ENCODE measurements at regions of chr3 and their contacts with region 1.

Region 1: DNA sequence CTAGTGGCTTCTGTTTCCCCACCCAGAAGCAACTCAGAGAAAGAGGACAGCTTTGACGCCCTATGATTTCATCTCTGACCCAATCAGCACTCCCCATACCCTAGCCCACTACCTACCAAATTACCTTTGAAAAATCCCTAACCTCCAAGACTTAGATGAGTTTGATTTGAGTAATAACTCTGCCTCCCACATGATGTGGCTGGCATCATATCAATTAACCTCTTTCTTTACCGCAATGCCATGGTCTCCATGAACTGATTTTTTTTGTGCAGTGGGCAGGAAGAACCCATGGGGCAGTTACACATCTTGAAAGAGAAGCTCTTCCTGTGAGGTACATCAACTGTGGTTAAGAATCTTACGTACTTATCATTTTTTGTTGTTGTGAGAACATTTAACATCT is 25.5 kb upstream of the APOD start:
- DNase-seq: peak in 28 of 35 experiments; percentile 12 to 78 (median 40)
- ATAC-seq: peak; percentile 73 to 96 (median 93)
- H3K4me3 ChIP-seq: no peak overlapping the region
- H3K4me3 Mint-ChIP-seq: peak overlapping the region in 1 of 3 donors; percentile 32
- H3K27ac ChIP-seq: peak overlapping the region; percentile 62
- H3K27ac Mint-ChIP-seq: peak overlapping the region; percentile 70 to 82
- H3K4me1 ChIP-seq: peaks cover 2 to 17% of the 10 kb centered on the region in 2 experiments
- H3K4me1 Mint-ChIP-seq: peaks cover 26 to 40% (median 37%) of the 10 kb centered on the region in 3 donors
- H3K27me3 ChIP-seq: no peaks in the 10 kb centered on the region
- H3K27me3 Mint-ChIP-seq: no peaks in the 10 kb centered on the region

Region 2: DNA sequence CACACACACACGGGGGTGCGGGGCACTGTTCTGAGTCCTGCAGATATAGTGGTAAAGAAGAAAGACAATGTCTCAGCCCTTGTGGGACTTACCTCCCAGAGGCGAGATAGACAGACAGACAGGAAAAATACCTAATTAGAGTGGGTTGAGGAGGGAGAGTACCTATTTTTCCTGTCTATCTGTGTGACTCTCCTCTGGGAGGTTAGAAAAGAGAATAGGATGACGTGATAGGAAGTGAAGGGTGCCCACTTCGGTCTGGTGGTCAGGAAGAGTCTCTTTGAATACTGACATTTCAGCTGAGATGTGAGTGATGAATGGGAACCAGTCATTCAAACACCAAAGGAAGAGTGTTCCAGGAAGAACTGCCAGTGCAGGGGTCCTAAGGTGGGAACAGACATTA is 21.4 kb before region 1 on chr3:
- CTCF ChIA-PET with region 1: no interaction called
- POLR2A ChIA-PET with region 1: no interaction called
- DNase-seq: no peak
- ATAC-seq: peak in 1 of 4 experiments; percentile 55
- H3K4me3 ChIP-seq: no peak overlapping the region
- H3K4me3 Mint-ChIP-seq: no peak overlapping the region
- H3K27ac ChIP-seq: no peak overlapping the region
- H3K27ac Mint-ChIP-seq: no peak overlapping the region
- H3K4me1 ChIP-seq: peaks cover 14 to 15% of the 10 kb centered on the region in 2 experiments
- H3K4me1 Mint-ChIP-seq: peaks cover 0 to 5% (median 3%) of the 10 kb centered on the region in 3 donors
- H3K27me3 ChIP-seq: peaks cover 0 to 3% of the 10 kb centered on the region in 2 experiments
- H3K27me3 Mint-ChIP-seq: no peaks in the 10 kb centered on the region

Region 3: DNA sequence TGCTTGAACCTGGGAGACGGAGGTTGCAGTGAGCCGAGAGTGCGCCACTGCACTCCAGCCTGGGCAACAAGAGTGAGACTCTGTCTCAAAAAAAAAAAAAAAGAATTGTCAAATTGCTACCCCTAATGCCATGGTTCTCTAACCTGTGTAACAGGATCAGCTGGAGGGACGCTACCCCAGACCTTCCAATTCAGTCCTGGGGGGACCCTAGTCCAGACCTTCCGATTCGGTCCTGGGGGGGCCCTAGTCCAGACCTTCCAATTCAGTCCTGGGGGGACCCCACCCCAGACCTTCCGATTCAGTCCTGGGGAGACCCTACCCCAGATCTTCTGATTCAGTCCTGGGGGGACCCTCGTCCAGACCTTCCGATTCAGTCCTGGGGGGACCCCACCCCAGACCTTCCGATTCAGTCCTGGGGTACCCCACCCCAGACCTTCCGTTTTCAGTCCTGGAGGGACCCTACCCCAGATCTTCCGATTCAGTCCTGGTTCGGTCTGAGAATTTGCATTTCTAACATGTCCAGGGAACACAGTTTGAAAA is 81.8 kb after region 1 on chr3:
- CTCF ChIA-PET with region 1: no interaction called
- POLR2A ChIA-PET with region 1: interaction called in 1 of 2 experiments, 19 read pairs
- DNase-seq: no peak
- ATAC-seq: no peak
- H3K4me3 ChIP-seq: no peak overlapping the region
- H3K4me3 Mint-ChIP-seq: no peak overlapping the region
- H3K27ac ChIP-seq: no peak overlapping the region
- H3K27ac Mint-ChIP-seq: no peak overlapping the region
- H3K4me1 ChIP-seq: no peaks in the 10 kb centered on the region
- H3K4me1 Mint-ChIP-seq: peaks cover 0 to 5% (median 2%) of the 10 kb centered on the region in 3 donors
- H3K27me3 ChIP-seq: no peaks in the 10 kb centered on the region
- H3K27me3 Mint-ChIP-seq: no peaks in the 10 kb centered on the region

Region 4: DNA sequence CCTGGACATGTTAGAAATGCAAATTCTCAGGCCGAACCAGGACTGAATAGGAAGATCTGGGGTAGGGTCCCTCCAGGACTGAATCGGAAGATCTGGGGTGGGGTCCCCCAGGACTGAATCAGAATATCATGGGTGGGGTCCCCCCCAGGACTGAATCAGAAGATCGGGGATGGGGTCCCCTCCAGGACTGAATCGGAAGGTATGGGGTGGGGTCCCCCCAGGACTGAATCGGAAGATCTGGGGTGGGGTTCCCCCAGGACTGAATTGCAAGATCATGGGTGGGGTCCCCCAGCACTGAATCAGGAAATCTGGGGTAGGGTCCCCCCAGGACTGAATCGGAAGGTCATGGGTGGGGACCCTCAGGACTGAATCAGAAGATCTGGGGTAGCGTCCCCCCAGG is 347.3 kb after region 1 on chr3:
- CTCF ChIA-PET with region 1: no interaction called
- POLR2A ChIA-PET with region 1: no interaction called
- DNase-seq: no peak
- ATAC-seq: no peak
- H3K4me3 ChIP-seq: no peak overlapping the region
- H3K4me3 Mint-ChIP-seq: no peak overlapping the region
- H3K27ac ChIP-seq: no peak overlapping the region
- H3K27ac Mint-ChIP-seq: no peak overlapping the region
- H3K4me1 ChIP-seq: peaks cover 0 to 3% of the 10 kb centered on the region in 2 experiments
- H3K4me1 Mint-ChIP-seq: peaks cover 17 to 32% (median 24%) of the 10 kb centered on the region in 3 donors
- H3K27me3 ChIP-seq: no peaks in the 10 kb centered on the region
- H3K27me3 Mint-ChIP-seq: no peaks in the 10 kb centered on the region